ENCODE measurements at regions of chr4 and their contacts with region 1.

Region 1: DNA sequence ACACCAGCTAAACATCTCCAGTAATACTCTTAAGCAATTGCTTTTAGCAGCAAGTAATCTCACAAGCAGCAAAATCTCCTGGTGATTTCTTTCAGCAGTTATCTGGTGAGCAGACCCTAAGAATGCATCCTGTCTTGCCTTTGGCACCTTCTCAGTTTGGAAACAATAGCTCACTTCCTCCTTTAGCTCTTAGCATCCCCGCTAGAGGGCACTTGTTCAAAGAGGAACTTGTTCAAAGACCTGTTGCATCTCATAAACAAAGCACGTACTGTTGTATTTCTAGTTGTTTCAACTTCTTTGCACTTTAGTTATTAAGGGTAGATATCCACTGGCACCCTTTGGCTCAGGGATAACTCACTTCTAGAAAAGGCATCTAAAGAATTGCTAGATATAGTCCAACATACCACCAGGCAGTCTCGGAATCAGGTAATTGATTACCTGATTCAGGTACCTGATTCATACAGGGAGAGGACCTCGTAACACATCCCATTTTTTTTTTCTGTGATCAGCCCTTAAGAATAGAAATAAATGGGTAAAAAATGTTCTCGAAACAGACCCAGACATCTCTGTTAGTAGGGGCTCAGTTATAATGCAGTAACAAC is 81.9 kb upstream of the QRFPR start:
- DNase-seq: no peak
- ATAC-seq: no peak

Region 2: DNA sequence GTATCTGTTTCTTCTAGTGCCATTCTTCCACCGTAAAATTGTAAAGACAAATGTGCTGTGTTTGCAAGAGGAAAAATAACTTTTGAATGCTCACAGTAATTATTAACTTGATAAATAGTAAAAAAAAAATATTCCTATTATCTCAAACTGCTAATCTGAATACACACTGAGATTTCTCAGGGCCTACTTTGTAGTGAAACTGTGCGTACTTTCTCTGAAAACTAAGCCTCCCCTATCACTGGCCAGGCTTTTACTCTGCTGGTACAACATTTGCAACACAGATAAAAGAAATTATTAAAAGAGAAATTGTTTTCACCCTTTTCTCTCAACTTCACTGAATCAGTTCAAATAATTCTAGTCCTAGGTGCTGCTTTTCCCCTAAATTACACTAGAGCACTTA is 677.6 kb before region 1 on chr4:
- intact Hi-C with region 1: no loop called
- DNase-seq: no peak
- ATAC-seq: no peak

Region 3: DNA sequence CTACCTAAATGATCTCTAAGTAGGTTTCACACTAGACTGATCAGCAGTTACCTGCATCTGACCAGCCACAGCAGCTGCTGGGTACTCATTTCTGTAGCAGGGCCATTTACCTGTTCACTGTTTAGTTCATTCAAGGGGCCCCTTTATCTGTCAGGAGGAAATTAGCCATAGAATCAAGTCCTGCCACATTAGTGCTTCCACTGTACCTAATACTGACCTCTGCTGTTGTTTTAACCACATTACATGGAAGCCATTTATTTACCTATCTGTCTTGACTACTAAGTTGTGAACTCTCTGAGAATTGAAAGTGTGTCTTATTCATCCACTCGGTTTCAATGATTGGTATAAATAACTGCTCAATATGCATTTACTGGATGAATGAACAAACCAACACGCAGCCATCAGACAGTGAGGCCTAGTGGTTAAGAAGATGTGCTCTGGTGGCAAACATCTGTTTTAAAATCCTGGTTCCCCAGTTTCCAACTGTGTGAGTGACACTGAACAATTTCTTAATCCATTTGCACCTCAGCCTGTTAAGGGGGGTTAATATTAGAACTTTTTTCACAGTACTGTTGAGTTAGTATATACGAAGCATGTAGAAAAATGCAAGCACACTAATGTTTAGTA is 264.0 kb after region 1 on chr4:
- intact Hi-C with region 1: loop called (anchors 10 kb)
- DNase-seq: no peak
- ATAC-seq: peak; percentile 75